Gastrocnemius medialis (tissue), 4 donors: ENCODE measurements at regions of chr10 and their contacts with region 1.

Region 1: GRCh38 chr10:110610308-110610774 is 33.8 kb upstream of the RBM20 start:
- DNase-seq: peak; percentile 27 to 45
- ATAC-seq: peak; percentile 78 to 79
- H3K4me3 ChIP-seq: no peak overlapping the region
- H3K27ac ChIP-seq: peak overlapping the region; percentile 64 to 77 (median 72)
- H3K4me1 ChIP-seq: peaks cover 10 to 14% of the 10 kb centered on the region in 2 donors
- H3K27me3 ChIP-seq: no peaks in the 10 kb centered on the region
- CTCF ChIP-seq: peak; percentile 67 to 88 (median 81)
- POLR2A ChIP-seq: no peak

Region 2: GRCh38 chr10:110387983-110388687 is 222.2 kb before region 1 on chr10:
- in situ Hi-C with region 1: no loop called
- intact Hi-C with region 1: no loop called
- DNase-seq: no peak
- ATAC-seq: no peak
- H3K4me3 ChIP-seq: no peak overlapping the region
- H3K27ac ChIP-seq: no peak overlapping the region
- H3K4me1 ChIP-seq: no peaks in the 10 kb centered on the region
- H3K27me3 ChIP-seq: peaks cover 0 to 8% (median 6%) of the 10 kb centered on the region in 3 donors
- CTCF ChIP-seq: no peak
- POLR2A ChIP-seq: no peak

Region 3: GRCh38 chr10:110671788-110672579 is 61.6 kb after region 1 on chr10:
- in situ Hi-C with region 1: loop called in 2 of 4 experiments (anchors 5 to 10 kb)
- intact Hi-C with region 1: no loop called
- DNase-seq: peak; percentile 70 to 78
- ATAC-seq: peak; percentile 75 to 81
- H3K4me3 ChIP-seq: peak overlapping the region; percentile 69 to 87 (median 71)
- H3K27ac ChIP-seq: peak overlapping the region; percentile 85 to 97 (median 90)
- H3K4me1 ChIP-seq: peaks cover 31 to 35% of the 10 kb centered on the region in 2 donors
- H3K27me3 ChIP-seq: no peaks in the 10 kb centered on the region
- CTCF ChIP-seq: peak; percentile 86 to 94 (median 92)
- POLR2A ChIP-seq: peak; percentile 44 to 52

Region 4: GRCh38 chr10:110681023-110681681 is 70.8 kb after region 1 on chr10:
- in situ Hi-C with region 1: loop called in 1 of 4 experiments (anchors 10 kb)
- intact Hi-C with region 1: loop called (anchors 1 kb)
- DNase-seq: peak in 1 of 2 donors; percentile 56
- ATAC-seq: peak; percentile 51 to 52
- H3K4me3 ChIP-seq: no peak overlapping the region
- H3K27ac ChIP-seq: peak overlapping the region; percentile 81 to 88 (median 84)
- H3K4me1 ChIP-seq: peaks cover 23 to 28% of the 10 kb centered on the region in 2 donors
- H3K27me3 ChIP-seq: no peaks in the 10 kb centered on the region
- CTCF ChIP-seq: peak; percentile 32 to 76 (median 58)
- POLR2A ChIP-seq: no peak

Region 5: GRCh38 chr10:110774069-110775019 is 164.0 kb after region 1 on chr10:
- in situ Hi-C with region 1: loop called in 2 of 4 experiments (anchors 25 kb)
- intact Hi-C with region 1: no loop called
- DNase-seq: no peak
- ATAC-seq: peak; percentile 53 to 82
- H3K4me3 ChIP-seq: no peak overlapping the region
- H3K27ac ChIP-seq: peak overlapping the region; percentile 50 to 71 (median 64)
- H3K4me1 ChIP-seq: peaks cover 45 to 54% of the 10 kb centered on the region in 2 donors
- H3K27me3 ChIP-seq: no peaks in the 10 kb centered on the region
- CTCF ChIP-seq: no peak
- POLR2A ChIP-seq: no peak

Region 6: GRCh38 chr10:110780704-110781103 is 170.4 kb after region 1 on chr10:
- in situ Hi-C with region 1: loop called in 2 of 4 experiments (anchors 25 kb)
- intact Hi-C with region 1: loop called (anchors 2 kb)
- DNase-seq: peak; percentile 79 to 90
- ATAC-seq: peak; percentile 81 to 90
- H3K4me3 ChIP-seq: no peak overlapping the region
- H3K27ac ChIP-seq: peak overlapping the region; percentile 65 to 82 (median 68)
- H3K4me1 ChIP-seq: peaks cover 51 to 55% of the 10 kb centered on the region in 2 donors
- H3K27me3 ChIP-seq: no peaks in the 10 kb centered on the region
- CTCF ChIP-seq: peak in 4 of 5 experiments; percentile 19 to 55 (median 42)
- POLR2A ChIP-seq: no peak